Activated T-helper 2 cell treated with anti-CD3 and anti-CD28 coated beads, Interferon-gamma antibody, Interleukin-2, Interleukin-4, amounts not matched to agents 10 μg/mL and 5 μg/mL and 100 μg/mL, durations not matched to agents 14 hours and 24 hours and 36 hours (primary cell): ENCODE measurements at regions of chr5 and their contacts with region 1.

Region 1: GRCh38 chr5:141992349-141992963 is 20.4 kb downstream of the GNPDA1 start:
- DNase-seq: no peak
- H3K4me3 Mint-ChIP-seq: no peak overlapping the region
- H3K27ac Mint-ChIP-seq: no peak overlapping the region
- H3K4me1 Mint-ChIP-seq: peaks cover 4% of the 10 kb centered on the region
- H3K27me3 Mint-ChIP-seq: no peaks in the 10 kb centered on the region

Region 2: DNA sequence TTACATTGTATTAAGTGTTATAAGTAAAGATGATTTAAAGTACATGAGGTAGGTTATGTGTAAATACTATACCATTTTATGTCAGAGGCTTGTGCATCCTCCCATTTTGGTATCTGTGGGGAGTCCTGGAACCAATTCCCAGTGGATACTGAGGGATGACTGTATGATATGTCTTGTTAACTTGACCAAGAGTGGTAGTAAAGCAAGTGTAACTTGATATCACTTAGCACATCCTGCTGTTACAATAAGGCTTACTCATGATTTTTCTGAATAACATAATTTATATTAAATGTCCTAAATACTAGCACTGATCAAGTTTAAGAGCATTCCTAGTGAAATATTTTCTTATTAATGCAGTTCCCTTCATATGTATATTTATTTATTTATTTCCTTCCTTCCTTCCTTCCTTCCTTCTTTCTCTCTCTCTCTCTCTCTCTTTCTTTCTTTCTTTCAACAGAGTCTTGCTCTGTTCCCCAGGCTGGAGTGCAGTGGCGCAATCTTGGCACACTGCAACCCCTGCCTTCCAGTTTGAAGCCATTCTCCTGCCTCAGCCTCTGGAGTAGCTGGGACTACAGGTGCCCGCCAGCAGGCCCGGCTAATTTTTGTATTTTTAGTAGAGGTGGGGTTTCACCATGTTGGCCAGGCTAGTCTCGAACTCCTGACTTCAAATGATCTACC is 123.6 kb after region 1 on chr5:
- intact Hi-C with region 1: no loop called
- DNase-seq: no peak
- H3K4me3 Mint-ChIP-seq: no peak overlapping the region
- H3K27ac Mint-ChIP-seq: no peak overlapping the region
- H3K4me1 Mint-ChIP-seq: peaks cover 64% of the 10 kb centered on the region
- H3K27me3 Mint-ChIP-seq: no peaks in the 10 kb centered on the region

Region 3: DNA sequence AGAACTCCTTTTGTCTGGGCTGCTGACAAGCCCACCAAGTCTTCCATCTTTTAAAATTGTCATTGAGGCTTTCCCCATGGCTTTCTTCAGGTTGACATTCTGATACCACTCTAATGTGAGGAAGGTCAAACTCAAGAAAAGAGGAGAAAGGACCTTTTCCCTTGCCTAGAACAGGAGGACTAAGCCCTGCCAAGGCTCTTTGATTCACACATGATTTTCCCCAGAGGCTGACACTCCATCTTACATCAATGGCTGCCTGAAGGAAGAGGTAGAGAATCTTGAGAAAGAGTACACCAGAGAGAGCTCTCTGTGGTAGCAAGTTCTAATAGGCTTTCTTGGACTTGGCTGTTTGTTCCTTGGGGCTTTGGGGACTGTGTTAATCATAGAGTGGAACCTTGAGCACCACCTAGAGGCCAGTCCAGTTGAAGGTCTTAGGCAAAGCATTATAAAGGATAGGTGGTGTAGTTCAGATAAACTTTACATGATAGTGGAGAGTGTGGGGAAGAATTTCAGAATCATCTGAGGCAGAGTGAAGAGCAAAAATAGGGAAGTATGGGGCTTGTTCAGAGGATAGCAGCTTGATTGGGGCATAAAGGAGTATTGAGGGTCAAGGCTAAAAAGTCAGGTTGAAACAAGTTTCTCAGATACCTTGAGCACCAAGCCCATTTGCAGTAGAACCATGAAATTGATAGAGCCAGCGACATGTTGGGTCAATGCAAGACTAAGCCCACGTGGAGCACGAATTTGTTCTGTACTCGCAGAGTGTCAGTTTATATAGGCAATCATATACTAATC is 152.8 kb after region 1 on chr5:
- intact Hi-C with region 1: loop called (anchors 1 kb)
- DNase-seq: peak; percentile 45
- H3K4me3 Mint-ChIP-seq: no peak overlapping the region
- H3K27ac Mint-ChIP-seq: no peak overlapping the region
- H3K4me1 Mint-ChIP-seq: peaks cover 3% of the 10 kb centered on the region
- H3K27me3 Mint-ChIP-seq: no peaks in the 10 kb centered on the region

Region 4: DNA sequence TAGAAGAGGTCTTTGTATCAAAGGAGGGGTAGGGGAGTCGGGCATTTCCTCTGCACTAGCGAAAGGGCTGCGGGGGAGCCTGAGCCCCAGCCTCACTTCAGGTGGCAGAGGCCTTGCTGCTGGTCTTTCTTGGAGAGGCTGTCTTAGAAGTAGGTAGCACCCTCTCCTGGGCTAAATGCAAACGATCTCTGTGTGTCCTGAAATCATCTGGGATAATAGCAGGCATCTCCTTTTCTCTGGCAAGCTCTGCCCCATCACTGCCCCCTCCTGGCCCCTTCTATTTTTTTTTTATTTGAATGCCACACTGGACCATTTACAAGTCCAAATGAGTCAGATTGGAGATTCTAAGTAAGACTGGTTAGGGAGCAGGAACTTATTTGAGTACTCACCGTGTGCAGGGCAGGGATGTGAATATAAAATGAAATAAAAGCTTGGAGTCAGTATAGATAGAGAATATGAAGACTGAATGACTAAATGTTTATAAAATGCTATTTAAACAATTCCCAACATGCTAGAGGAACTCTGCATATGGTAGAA is 556.4 kb after region 1 on chr5:
- intact Hi-C with region 1: loop called (anchors 10 kb)
- DNase-seq: no peak
- H3K4me3 Mint-ChIP-seq: no peak overlapping the region
- H3K27ac Mint-ChIP-seq: no peak overlapping the region
- H3K4me1 Mint-ChIP-seq: no peaks in the 10 kb centered on the region
- H3K27me3 Mint-ChIP-seq: peaks cover 44% of the 10 kb centered on the region